ENCODE measurements at regions of chr7 and their contacts with region 1.

Region 1: GRCh38 chr7:107462740-107463444 is 7.0 kb upstream of the GPR22 start:
- DNase-seq: peak; percentile 65 to 69
- H3K4me3 ChIP-seq: no peak overlapping the region
- H3K27ac ChIP-seq: no peak overlapping the region
- H3K4me1 ChIP-seq: no peaks in the 10 kb centered on the region
- H3K27me3 ChIP-seq: no peaks in the 10 kb centered on the region
- CTCF ChIP-seq: peak; percentile 19 to 94 (median 84)
- POLR2A ChIP-seq: no peak

Region 2: DNA sequence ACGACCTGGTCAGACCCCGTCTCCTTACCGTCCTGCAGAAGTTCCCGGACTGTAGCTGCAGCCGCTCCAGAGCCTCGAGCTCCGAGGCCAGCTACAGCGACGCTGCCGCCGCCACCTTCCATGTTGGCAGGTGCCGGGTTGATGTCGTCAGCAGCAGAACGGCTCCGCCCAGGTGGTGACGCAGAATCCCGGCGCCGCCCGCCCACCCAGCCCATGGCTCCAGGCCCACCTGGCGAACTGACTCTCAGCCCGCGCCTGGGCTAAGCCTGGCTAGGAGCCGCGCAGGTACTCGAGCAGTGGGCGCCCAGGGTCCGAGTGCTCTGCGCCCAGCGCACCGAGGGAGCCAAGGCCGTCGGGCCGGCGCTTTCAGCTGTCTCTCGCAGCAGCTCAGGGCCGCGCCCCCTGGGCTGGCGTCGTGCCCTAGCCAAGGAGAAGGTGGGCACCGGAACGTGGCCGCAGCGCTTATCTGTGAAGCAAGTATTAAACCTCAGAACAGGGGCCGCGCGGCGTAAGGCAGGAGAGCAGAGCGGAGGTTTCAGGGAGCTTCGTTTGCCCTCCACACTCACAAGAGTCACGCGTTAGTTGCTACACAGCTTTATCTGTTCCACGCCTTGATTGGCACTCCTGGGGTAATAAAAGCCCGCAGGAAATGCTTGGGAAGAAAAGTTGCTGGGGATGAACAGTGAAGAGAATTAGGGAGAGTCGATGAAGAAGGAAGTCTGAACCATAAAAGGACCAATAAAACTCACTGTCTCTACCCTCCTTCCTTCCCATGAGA is 101.1 kb after region 1 on chr7 and contains the starts of genes COG5 and DUS4L:
- intact Hi-C with region 1: loop called (anchors 10 kb)
- DNase-seq: peak; percentile 77 to 80
- H3K4me3 ChIP-seq: peak within 1 kb of the TSS; percentile 60 to 94 (median 81)
- H3K27ac ChIP-seq: peak within 1 kb of the TSS; percentile 66 to 98 (median 91)
- H3K4me1 ChIP-seq: peaks cover 21 to 39% of the 10 kb centered on the region in 2 donors
- H3K27me3 ChIP-seq: no peaks in the 10 kb centered on the region
- CTCF ChIP-seq: no peak
- POLR2A ChIP-seq: peak; percentile 51 to 85
- total RNA-seq, gene COG5: 108 to 268 (median 148) TPM
- total RNA-seq, gene DUS4L: 14.6 to 16.9 (median 16.1) TPM

Region 3: DNA sequence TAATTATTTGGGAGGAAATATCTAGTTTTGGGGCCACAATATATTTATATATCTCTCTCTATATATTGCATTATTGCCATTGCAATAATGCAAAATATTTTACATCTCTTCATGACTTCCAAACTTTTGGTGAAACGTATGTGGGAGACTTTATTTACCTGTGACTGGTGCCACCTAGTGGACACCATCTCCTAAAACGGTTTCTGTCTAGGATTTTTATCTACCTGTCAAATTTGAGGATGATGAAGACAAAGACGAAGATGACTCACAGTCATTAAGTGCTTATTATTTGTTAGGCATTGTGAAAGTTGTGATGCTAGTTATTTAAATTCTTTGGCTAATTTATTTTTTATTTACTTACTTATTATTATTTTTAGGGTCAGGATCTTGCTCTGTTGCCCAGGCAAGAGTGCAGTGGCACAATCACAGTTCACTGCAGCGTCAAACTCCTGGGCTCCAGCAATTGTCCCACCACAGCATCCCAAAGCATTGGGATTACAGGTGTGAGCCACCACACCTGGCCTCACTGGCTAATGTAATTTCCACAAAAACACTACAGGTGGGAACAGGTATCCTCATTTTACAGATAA is 262.4 kb after region 1 on chr7:
- intact Hi-C with region 1: loop called (anchors 5 kb)
- DNase-seq: peak; percentile 59 to 62
- H3K4me3 ChIP-seq: no peak overlapping the region
- H3K27ac ChIP-seq: no peak overlapping the region
- H3K4me1 ChIP-seq: peaks cover 10 to 29% of the 10 kb centered on the region in 2 donors
- H3K27me3 ChIP-seq: no peaks in the 10 kb centered on the region
- CTCF ChIP-seq: peak in 5 of 6 experiments; percentile 50 to 79 (median 66)
- POLR2A ChIP-seq: no peak

Region 4: DNA sequence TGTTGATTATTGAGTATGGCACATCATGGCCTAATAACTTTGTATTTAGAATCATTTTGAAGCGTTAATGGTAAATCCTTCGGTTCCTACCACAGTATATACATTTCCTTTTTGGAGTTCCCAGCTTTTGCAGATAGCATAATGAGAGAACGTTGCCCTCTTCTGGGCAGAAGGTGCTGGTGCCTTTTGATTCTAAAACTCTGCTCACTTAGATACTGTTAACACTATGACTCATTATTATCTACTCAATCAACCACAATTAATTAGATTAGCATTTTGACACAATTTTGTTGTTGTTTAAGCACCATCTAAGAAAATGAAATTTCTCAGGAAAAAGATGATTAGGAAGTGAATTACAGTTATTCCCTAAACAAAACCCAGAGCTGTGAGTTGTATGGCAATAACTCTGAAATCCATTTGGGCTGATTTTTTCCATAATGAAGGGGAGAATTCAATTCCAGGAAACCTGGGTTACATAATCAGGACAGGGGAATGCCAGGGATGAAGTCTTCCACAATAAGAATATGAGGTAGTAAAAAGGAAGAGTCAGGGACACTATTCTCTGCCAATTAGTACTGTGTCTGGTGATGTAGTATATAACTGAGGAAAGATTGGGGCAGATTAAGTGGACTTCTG is 416.6 kb after region 1 on chr7:
- intact Hi-C with region 1: loop called (anchors 10 kb)
- DNase-seq: peak; percentile 34 to 39
- H3K4me3 ChIP-seq: no peak overlapping the region
- H3K27ac ChIP-seq: no peak overlapping the region
- H3K4me1 ChIP-seq: no peaks in the 10 kb centered on the region
- H3K27me3 ChIP-seq: no peaks in the 10 kb centered on the region
- CTCF ChIP-seq: peak in 5 of 6 experiments; percentile 32 to 77 (median 72)
- POLR2A ChIP-seq: no peak

Region 5: GRCh38 chr7:107917763-107918651 is 455.1 kb after region 1 on chr7:
- intact Hi-C with region 1: no loop called
- DNase-seq: no peak
- H3K4me3 ChIP-seq: no peak overlapping the region
- H3K27ac ChIP-seq: no peak overlapping the region
- H3K4me1 ChIP-seq: peaks cover 0 to 7% of the 10 kb centered on the region in 2 donors
- H3K27me3 ChIP-seq: no peaks in the 10 kb centered on the region
- CTCF ChIP-seq: no peak
- POLR2A ChIP-seq: no peak

Measured in thyroid gland (tissue), 4 donors.